ENCODE measurements at regions of chr2 and their contacts with region 1.

Region 1: GRCh38 chr2:118882709-118883210 is 35.3 kb upstream of the EN1 start:
- DNase-seq: peak in 4 of 5 donors; percentile 41 to 64 (median 58)
- H3K4me3 ChIP-seq: peak overlapping the region in 1 of 2 donors; percentile 46
- H3K4me3 Mint-ChIP-seq: peak overlapping the region; percentile 27 to 89 (median 86)
- H3K27ac ChIP-seq: no peak overlapping the region
- H3K27ac Mint-ChIP-seq: peak overlapping the region in 3 of 7 donors; percentile 42 to 83 (median 67)
- H3K4me1 ChIP-seq: peaks cover 15% of the 10 kb centered on the region
- H3K4me1 Mint-ChIP-seq: peaks cover 10 to 22% (median 13%) of the 10 kb centered on the region in 4 donors
- H3K27me3 ChIP-seq: no peaks in the 10 kb centered on the region
- H3K27me3 Mint-ChIP-seq: peaks cover 4 to 8% of the 10 kb centered on the region in 2 donors

Region 2: DNA sequence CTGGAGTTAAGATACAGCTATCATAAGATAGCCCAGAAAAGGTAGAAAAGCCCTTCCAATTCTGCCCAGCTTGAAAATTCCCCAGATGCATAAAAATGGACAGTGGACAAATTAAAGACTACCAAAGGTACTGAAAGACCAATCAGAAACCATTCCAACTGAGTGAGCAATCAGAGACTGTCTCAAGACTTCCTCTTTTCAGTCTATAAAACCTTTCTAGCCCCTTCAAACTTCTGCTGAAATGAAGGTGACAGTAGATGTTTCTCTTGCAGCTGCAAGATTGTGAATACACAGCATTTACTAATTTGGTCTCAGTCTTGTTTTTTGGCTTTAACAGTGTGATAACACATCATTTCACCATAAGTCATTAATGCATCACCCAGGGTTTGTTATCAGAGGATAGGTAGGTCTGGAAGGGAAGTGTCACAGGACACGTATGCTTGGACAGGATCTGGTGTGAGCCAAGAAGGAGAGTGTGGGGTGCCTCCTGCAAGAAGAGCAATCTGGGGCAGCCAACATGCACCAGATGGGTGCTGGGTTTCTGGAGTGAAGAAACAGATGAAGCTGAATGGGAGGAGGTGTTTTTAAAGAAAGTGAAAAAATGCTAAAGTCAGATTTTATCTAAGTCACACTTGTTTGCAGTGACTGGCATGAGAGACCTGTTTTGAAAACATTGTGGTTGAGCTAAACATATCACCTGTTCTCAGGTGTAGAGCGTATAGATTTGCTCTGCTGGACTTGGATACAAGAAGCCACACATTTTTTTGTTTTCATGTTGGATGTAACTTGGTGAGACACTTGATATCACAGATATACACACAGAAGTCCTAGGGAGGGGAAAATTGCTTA is 1143.5 kb before region 1 on chr2:
- CTCF ChIA-PET with region 1: no interaction called
- POLR2A ChIA-PET with region 1: no interaction called
- intact Hi-C with region 1: no loop called
- DNase-seq: no peak
- H3K4me3 ChIP-seq: no peak overlapping the region
- H3K4me3 Mint-ChIP-seq: no peak overlapping the region
- H3K27ac ChIP-seq: no peak overlapping the region
- H3K27ac Mint-ChIP-seq: no peak overlapping the region
- H3K4me1 ChIP-seq: no peaks in the 10 kb centered on the region
- H3K4me1 Mint-ChIP-seq: no peaks in the 10 kb centered on the region
- H3K27me3 ChIP-seq: no peaks in the 10 kb centered on the region
- H3K27me3 Mint-ChIP-seq: no peaks in the 10 kb centered on the region

Region 3: DNA sequence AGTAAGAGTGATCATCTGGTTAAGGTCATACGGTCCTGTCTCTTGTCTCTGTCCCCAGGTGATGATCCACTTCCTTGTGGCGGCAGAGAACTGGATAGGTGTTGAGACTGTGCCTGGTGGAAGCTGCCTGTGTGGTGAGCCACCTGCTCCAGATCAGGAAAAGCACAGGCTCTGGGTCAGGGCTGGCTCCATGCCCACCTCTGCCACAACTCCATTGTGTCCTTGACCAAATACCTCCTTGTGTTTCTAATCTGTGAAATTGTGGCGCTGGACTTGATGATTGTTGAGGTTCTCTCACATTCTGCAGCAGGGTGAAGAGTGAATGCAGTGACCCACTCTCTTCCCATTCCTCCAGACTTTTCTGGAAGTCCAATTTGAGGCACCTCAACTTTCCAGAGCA is 10.3 kb after region 1 on chr2:
- CTCF ChIA-PET with region 1: interaction called, 11 read pairs
- POLR2A ChIA-PET with region 1: no interaction called
- intact Hi-C with region 1: no loop called
- DNase-seq: no peak
- H3K4me3 ChIP-seq: no peak overlapping the region
- H3K4me3 Mint-ChIP-seq: no peak overlapping the region
- H3K27ac ChIP-seq: no peak overlapping the region
- H3K27ac Mint-ChIP-seq: no peak overlapping the region
- H3K4me1 ChIP-seq: no peaks in the 10 kb centered on the region
- H3K4me1 Mint-ChIP-seq: no peaks in the 10 kb centered on the region
- H3K27me3 ChIP-seq: no peaks in the 10 kb centered on the region
- H3K27me3 Mint-ChIP-seq: peaks cover 0 to 2% of the 10 kb centered on the region in 2 donors

Region 4: GRCh38 chr2:119264781-119265692 is 382.3 kb after region 1 on chr2:
- CTCF ChIA-PET with region 1: interaction called, 8 read pairs
- POLR2A ChIA-PET with region 1: no interaction called
- intact Hi-C with region 1: loop called (anchors 10 kb)
- DNase-seq: peak in 3 of 5 donors; percentile 5 to 11 (median 9)
- H3K4me3 ChIP-seq: no peak overlapping the region
- H3K4me3 Mint-ChIP-seq: no peak overlapping the region
- H3K27ac ChIP-seq: no peak overlapping the region
- H3K27ac Mint-ChIP-seq: no peak overlapping the region
- H3K4me1 ChIP-seq: no peaks in the 10 kb centered on the region
- H3K4me1 Mint-ChIP-seq: no peaks in the 10 kb centered on the region
- H3K27me3 ChIP-seq: no peaks in the 10 kb centered on the region
- H3K27me3 Mint-ChIP-seq: peaks cover 2 to 4% of the 10 kb centered on the region in 2 donors

Region 5: DNA sequence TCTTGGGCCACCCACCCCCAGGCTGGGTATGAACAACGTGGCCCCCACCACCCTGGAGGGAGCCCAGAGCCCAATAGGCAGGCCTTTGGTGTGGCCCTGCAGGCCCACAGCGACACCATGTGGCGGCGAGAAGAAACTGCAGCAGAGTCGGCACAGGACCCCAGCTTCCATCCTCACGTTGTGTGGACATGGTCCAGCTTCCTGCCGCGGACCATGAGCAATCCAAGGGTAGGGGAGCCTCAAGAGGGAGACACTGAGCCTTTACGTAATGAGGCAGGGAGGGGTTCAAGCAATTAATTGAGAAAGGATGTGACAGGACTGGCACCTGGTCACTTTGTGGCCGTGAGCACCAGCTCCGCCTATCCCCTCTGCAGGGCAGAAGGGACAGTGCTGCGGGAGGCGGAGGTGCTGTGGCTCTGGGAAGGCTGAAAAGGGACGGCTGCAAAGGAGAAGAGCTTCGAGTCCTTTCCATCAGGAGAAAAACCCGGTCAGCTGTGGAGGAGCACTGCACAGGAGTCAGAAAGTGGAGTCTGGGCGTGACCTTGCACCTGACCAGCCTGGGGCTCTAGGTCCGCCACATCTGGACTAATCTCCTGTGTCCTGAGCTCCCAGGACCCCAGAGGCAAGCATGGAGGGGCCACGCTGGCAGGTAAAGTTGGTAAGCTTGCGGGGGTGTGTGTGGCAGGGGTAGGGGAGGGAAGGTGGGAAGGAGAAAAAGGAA is 593.7 kb after region 1 on chr2:
- CTCF ChIA-PET with region 1: interaction called, 13 read pairs
- POLR2A ChIA-PET with region 1: no interaction called
- intact Hi-C with region 1: no loop called
- DNase-seq: peak in 4 of 5 donors; percentile 9 to 19 (median 12)
- H3K4me3 ChIP-seq: no peak overlapping the region
- H3K4me3 Mint-ChIP-seq: no peak overlapping the region
- H3K27ac ChIP-seq: no peak overlapping the region
- H3K27ac Mint-ChIP-seq: no peak overlapping the region
- H3K4me1 ChIP-seq: no peaks in the 10 kb centered on the region
- H3K4me1 Mint-ChIP-seq: no peaks in the 10 kb centered on the region
- H3K27me3 ChIP-seq: no peaks in the 10 kb centered on the region
- H3K27me3 Mint-ChIP-seq: peaks cover 8% of the 10 kb centered on the region in 2 donors